ENCODE measurements at regions of chr2 and their contacts with region 1.

Region 1: DNA sequence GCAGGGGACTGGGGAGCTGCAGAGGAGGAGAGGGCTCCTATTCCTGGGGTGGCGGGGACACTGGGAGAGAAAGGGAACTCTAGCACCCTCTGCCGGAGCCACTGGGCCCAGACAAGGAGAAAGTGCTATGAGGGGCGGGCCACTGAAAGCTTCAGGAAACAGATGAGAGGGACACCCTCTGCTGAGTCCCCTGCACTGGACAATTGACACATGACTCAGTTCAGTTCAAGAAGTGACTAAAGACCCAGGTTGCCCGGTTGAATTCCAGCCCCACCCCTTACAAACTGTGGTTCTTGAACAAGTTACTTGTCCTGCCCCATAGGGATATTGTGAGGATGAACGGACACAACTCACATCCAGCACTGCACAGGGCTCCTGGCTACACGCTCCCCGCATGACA is 5.0 kb downstream of the RUFY4 start:
- DNase-seq: no peak
- H3K4me3 ChIP-seq: no peak overlapping the region
- CTCF ChIP-seq: peak; percentile 66

Region 2: GRCh38 chr2:217301142-217301925 is 772.7 kb before region 1 on chr2:
- CTCF ChIA-PET with region 1: no interaction called
- POLR2A ChIA-PET with region 1: no interaction called
- DNase-seq: no peak
- H3K4me3 ChIP-seq: no peak overlapping the region
- CTCF ChIP-seq: no peak

Region 3: DNA sequence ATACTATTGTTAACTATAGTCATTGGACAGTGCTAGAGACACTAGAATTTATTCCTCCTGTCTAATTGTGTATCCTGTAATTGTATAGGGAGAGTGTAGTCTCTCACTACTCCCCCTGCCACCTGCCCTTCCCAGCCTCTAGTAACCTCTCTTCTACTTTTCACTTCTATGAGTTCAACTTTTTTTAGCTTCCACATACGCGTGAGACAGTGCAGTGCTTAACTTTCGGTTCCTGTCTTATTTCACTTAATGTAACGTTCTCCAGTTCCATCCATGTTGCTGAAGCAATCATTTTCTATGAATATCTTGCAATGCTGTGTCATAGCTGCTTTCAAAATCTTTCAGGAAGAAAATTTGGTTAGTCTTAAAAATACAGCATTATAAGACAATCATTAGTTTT is 27.8 kb before region 1 on chr2:
- CTCF ChIA-PET with region 1: interaction called, 12 read pairs
- POLR2A ChIA-PET with region 1: no interaction called
- DNase-seq: no peak
- H3K4me3 ChIP-seq: no peak overlapping the region
- CTCF ChIP-seq: no peak

Region 4: DNA sequence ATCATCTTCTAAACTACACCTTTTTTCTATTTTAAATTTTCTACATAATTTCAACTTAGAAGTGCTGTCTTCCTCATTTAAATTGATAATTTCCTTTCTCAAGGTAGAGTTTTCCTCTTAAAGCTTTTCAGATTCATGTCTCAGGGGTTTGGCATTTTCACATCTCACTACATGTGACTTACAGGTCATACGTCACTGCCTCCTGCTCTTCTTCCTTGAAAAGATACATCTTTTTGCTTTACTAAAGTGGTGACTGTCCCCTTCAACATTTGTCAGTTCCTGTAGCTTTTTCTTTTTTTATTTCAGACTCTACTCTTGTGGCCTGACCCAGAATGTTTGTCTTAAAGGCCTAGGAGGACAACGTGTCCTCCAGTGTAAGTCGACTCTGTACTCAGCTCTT is 22.1 kb before region 1 on chr2:
- CTCF ChIA-PET with region 1: interaction called, 15 read pairs
- POLR2A ChIA-PET with region 1: no interaction called
- DNase-seq: no peak
- H3K4me3 ChIP-seq: no peak overlapping the region
- CTCF ChIP-seq: no peak

Region 5: DNA sequence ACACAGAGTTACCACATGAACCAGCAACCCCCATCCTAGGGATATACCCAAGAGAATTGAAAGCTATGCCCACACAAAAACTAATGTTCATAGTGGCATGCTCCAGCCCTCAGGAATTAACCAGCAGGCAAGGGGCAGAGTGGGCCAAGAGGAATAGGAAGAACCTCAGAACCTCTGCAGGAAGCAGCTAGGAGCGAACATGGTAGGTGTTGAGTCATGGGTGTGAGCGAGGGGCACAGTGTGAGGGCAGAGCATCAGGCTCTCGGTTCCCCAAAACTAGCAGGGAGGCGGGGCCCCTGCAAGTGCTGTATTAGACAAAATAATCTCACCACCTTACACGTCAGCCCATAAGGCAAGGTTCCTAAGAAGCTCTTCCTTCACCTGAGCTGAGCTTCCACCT is 10.5 kb before region 1 on chr2:
- CTCF ChIA-PET with region 1: interaction called, 43 read pairs
- POLR2A ChIA-PET with region 1: no interaction called
- DNase-seq: no peak
- H3K4me3 ChIP-seq: no peak overlapping the region
- CTCF ChIP-seq: no peak

Region 6: GRCh38 chr2:218093879-218094278 is 19.8 kb after region 1 on chr2:
- CTCF ChIA-PET with region 1: no interaction called
- POLR2A ChIA-PET with region 1: no interaction called
- DNase-seq: no peak
- H3K4me3 ChIP-seq: no peak overlapping the region
- CTCF ChIP-seq: no peak

Measured in AG04449 (cell line).